ENCODE measurements at regions of chr19 and their contacts with region 1.

Region 1: DNA sequence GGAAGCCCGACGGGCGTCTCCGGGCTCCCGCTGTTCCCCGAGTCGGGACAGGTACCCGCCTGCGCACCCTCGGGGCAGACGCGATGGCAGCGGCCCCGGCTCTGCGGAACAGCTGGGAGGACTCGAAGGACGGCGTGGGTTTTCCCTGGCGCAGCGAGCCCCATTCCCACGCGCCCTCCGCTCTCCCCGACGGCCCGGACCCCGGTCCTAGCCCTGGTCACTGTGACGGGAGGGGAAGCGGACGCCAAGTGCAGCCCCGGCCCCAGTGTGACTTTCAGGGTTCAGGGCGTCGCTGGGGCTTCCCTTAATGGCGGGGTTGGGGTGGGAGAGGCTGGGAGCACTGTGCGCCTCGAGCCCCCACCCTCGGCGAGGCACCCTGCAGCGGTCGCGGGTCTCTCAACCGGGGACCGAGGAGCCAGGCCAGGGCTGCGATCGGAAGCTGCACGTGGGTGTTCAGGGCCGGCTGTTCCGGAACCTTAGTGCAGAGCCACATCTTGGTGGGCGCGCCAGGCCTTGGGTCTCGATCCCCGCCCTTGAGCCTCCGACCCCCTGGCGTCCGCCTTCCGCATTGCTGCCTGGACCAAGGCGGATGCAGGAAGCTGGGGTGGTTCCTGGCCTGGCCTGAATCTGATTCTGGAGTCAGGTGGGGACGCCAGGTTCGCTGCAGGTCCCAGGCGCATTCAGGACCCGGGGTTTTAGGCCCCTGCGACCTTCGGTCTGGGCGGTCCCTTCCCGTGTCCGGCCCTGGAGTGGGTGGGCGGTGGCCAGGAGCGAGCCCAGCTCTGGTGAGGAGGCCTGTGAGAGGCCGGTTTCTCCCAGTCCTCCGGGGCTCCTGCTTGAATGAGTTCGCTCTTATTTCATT is 3.5 kb downstream of the LGALS7B start:
- DNase-seq: no peak
- H3K4me3 Mint-ChIP-seq: peak overlapping the region; percentile 24
- H3K27ac Mint-ChIP-seq: peak overlapping the region; percentile 72
- H3K4me1 Mint-ChIP-seq: peaks cover 12% of the 10 kb centered on the region
- H3K27me3 Mint-ChIP-seq: no peaks in the 10 kb centered on the region
- CTCF ChIP-seq: no peak

Region 2: GRCh38 chr19:38773470-38774189 is 18.9 kb before region 1 on chr19 and contains the start of gene LGALS7:
- CTCF ChIA-PET with region 1: interaction called, 7 read pairs
- POLR2A ChIA-PET with region 1: interaction called, 18 read pairs
- intact Hi-C with region 1: no loop called
- DNase-seq: no peak
- H3K4me3 Mint-ChIP-seq: no peak within 1 kb of the TSS
- H3K27ac Mint-ChIP-seq: peak within 1 kb of the TSS; percentile 69
- H3K4me1 Mint-ChIP-seq: peaks cover 15% of the 10 kb centered on the region
- H3K27me3 Mint-ChIP-seq: no peaks in the 10 kb centered on the region
- CTCF ChIP-seq: no peak
- total RNA-seq, gene LGALS7: 1.1 TPM in 1 of 2 replicates, not detected in the other